ENCODE measurements at regions of chr1 and their contacts with region 1.

Region 1: DNA sequence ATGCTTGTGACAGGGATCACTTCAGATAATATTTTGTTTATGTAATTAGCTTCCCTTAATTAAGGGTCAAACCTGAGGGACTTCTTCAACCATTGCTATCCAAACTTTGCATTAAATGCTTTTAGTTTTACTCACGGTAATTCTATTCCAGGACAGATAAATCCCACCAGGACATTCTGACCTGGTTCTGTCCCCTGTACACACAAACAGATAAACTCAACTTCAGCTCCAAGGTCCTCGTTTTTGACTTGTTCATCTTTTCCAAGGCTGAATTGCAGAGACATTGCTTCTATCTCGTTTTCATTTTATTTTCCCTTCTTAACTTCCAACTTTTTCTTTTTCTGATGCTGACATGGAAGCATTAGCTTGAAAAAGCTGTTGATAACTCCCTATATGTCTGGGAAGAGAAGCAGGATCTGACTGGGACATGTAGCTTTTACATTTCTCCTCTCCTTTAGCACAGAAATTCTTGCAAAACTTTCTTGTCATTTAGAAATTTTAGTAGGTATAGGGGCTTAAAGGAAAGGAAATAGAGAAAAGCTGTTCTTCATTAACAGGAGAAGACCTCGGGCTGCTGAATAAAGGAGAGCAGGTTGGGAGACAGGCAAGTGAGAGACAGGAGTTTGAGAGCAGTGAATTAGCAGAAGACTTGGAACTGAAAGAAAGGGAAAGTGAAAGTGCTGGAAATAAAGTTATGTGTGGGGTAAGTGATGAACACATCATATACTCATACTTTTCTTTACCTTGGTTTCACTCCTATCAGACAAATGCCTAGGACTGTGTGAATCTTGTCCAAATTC is 231.7 kb upstream of the B3GALT2 start:
- DNase-seq: no peak
- ATAC-seq: peak in 3 of 4 donors; percentile 59 to 75 (median 68)
- H3K4me3 ChIP-seq: peak overlapping the region in 11 of 12 donors; percentile 6 to 61 (median 40)
- H3K27ac ChIP-seq: peak overlapping the region in 9 of 12 donors; percentile 9 to 65 (median 43)
- H3K4me1 ChIP-seq: peaks cover 0 to 19% (median 6%) of the 10 kb centered on the region in 12 donors
- H3K27me3 ChIP-seq: no peaks in the 10 kb centered on the region
- CTCF ChIP-seq: no peak
- POLR2A ChIP-seq: no peak

Region 2: DNA sequence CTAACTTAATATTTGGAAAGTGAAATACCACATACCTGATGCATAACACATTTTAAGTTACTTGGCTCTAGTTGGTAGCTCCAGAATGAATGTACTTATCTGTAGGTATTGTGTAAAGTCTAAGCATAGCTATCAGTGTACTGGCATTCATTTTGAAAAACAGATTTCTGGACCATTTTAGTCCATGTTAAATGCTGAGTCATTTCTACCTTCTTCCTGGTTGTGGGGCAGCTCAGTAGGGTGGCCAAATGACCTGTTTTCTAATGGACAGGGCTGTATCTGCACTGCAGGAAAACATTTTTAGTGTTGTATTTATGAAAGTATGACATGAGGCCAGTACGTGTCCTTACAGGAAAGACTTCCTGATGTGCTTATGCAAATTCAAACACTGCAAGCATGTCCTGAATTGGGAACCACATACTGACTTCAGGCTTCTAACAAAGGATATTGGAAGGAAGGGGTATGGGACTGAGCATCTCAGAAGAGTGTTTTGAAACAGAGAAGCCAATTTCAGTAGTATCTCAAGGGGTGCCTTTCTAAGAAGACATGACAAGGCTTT is 68.6 kb after region 1 on chr1:
- intact Hi-C with region 1: no loop called
- DNase-seq: no peak
- ATAC-seq: no peak
- H3K4me3 ChIP-seq: no peak overlapping the region
- H3K27ac ChIP-seq: no peak overlapping the region
- H3K4me1 ChIP-seq: no peaks in the 10 kb centered on the region
- H3K27me3 ChIP-seq: no peaks in the 10 kb centered on the region
- CTCF ChIP-seq: no peak
- POLR2A ChIP-seq: no peak

Region 3: GRCh38 chr1:193498088-193498655 is 80.0 kb after region 1 on chr1:
- intact Hi-C with region 1: no loop called
- DNase-seq: no peak
- ATAC-seq: no peak
- H3K4me3 ChIP-seq: no peak overlapping the region
- H3K27ac ChIP-seq: no peak overlapping the region
- H3K4me1 ChIP-seq: peaks cover 0 to 5% (median 0%) of the 10 kb centered on the region in 12 donors
- H3K27me3 ChIP-seq: peaks cover 0 to 3% (median 0%) of the 10 kb centered on the region in 9 donors
- CTCF ChIP-seq: no peak
- POLR2A ChIP-seq: no peak

Region 4: DNA sequence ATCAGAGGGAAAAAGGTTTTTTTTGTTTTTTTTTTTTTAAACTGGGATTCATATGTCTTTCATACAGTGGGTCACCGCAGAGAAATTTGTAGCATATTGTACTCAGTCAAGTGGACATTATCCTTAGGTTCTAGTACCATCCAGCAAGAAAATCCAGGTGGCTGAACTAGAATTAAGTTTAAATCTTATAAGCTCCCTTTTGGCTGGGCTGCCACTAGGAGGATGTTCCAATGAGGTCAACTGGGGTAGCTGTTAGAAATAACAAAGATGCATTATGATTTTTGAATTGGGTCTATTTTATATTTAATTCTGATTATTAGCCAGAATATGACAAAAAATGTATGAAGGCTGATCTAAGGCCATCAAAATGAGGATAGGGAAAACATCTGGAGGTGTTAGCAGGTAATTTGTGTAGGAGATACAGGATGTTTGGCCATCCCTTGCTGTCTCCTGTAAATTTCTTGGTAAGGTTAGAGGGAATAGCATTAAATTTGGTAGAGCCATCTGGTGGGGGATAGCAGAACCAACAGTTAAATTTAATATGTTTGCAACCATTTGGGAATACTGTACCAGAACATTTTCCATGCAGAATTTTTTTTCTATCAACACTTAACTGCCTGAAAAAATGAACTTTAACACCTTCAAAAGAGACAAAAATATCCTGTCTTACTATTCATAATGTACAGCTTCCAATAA is 336.7 kb after region 1 on chr1:
- intact Hi-C with region 1: loop called in 1 of 10 experiments (anchors 10 kb)
- DNase-seq: no peak
- ATAC-seq: no peak
- H3K4me3 ChIP-seq: no peak overlapping the region
- H3K27ac ChIP-seq: no peak overlapping the region
- H3K4me1 ChIP-seq: no peaks in the 10 kb centered on the region
- H3K27me3 ChIP-seq: no peaks in the 10 kb centered on the region
- CTCF ChIP-seq: peak in 2 of 12 donors; percentile 9 to 17
- POLR2A ChIP-seq: no peak